H1 (cell line): ENCODE measurements at regions of chr17 and their contacts with region 1.

Region 1: DNA sequence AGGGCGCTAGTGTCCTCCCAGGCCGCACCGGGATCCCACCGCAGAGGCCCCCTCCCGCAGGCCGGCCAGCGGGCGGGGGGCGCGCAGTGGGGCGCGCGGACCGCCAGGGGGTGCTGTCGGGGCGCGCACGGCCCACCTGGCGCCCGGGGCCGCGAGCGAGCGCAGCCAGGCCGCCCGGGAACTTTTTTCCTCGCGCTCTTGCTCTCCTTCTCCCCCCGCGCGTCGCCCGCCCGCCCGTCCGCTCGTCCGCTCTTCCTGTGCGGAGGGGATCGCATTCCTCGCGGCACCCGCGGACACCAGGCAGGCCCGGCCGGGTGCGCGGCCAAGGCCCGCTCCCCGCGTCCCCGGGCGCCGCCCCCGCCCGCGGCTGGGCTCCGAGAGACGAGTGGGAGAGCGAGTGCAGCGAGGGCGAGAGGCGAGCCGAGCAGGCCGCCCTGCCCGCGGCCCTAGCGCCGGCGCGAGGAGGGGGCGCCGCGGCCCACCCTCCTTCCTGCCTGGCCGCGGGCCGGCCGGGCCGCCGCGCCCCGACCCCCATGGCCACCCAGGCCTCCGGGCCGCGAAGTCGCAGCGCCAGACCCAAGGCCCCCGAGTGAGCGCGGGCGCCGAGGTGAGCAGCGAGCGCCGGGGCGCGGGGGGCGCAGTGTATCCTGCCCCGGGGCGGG is at the start of gene RAI1:
- DNase-seq: peak in 1 of 2 experiments; percentile 83
- H3K4me3 ChIP-seq: peak within 1 kb of the TSS; percentile 34 to 71 (median 38); a peak in 6 of 8 replicates
- H3K27ac ChIP-seq: no peak within 1 kb of the TSS
- H3K4me1 ChIP-seq: peaks cover 4 to 30% (median 22%) of the 10 kb centered on the region in 4 experiments
- H3K27me3 ChIP-seq: peaks cover 70 to 96% (median 94%) of the 10 kb centered on the region in 4 experiments
- CTCF ChIP-seq: peak; percentile 77 to 83 (median 80)
- EP300 ChIP-seq: no peak
- POLR2A ChIP-seq: no peak
- RAD21 ChIP-seq: peak; percentile 41 to 82; a peak in 3 of 4 replicates
- total RNA-seq, gene RAI1: 0.80 and 1.2 TPM in 2 replicates

Region 2: GRCh38 chr17:17636272-17636885 is 44.9 kb before region 1 on chr17:
- CTCF ChIA-PET with region 1: no interaction called
- POLR2A ChIA-PET with region 1: no interaction called
- DNase-seq: no peak
- H3K4me3 ChIP-seq: no peak overlapping the region
- H3K27ac ChIP-seq: no peak overlapping the region
- H3K4me1 ChIP-seq: no peaks in the 10 kb centered on the region
- H3K27me3 ChIP-seq: no peaks in the 10 kb centered on the region; a peak in 1 of 7 replicates
- CTCF ChIP-seq: no peak
- EP300 ChIP-seq: no peak
- POLR2A ChIP-seq: no peak
- RAD21 ChIP-seq: no peak

Region 3: GRCh38 chr17:17653343-17653742 is 28.0 kb before region 1 on chr17:
- CTCF ChIA-PET with region 1: no interaction called
- POLR2A ChIA-PET with region 1: no interaction called
- DNase-seq: no peak
- H3K4me3 ChIP-seq: no peak overlapping the region
- H3K27ac ChIP-seq: no peak overlapping the region
- H3K4me1 ChIP-seq: no peaks in the 10 kb centered on the region
- H3K27me3 ChIP-seq: no peaks in the 10 kb centered on the region; a peak in 1 of 7 replicates
- CTCF ChIP-seq: no peak
- EP300 ChIP-seq: no peak
- POLR2A ChIP-seq: no peak
- RAD21 ChIP-seq: no peak

Region 4: DNA sequence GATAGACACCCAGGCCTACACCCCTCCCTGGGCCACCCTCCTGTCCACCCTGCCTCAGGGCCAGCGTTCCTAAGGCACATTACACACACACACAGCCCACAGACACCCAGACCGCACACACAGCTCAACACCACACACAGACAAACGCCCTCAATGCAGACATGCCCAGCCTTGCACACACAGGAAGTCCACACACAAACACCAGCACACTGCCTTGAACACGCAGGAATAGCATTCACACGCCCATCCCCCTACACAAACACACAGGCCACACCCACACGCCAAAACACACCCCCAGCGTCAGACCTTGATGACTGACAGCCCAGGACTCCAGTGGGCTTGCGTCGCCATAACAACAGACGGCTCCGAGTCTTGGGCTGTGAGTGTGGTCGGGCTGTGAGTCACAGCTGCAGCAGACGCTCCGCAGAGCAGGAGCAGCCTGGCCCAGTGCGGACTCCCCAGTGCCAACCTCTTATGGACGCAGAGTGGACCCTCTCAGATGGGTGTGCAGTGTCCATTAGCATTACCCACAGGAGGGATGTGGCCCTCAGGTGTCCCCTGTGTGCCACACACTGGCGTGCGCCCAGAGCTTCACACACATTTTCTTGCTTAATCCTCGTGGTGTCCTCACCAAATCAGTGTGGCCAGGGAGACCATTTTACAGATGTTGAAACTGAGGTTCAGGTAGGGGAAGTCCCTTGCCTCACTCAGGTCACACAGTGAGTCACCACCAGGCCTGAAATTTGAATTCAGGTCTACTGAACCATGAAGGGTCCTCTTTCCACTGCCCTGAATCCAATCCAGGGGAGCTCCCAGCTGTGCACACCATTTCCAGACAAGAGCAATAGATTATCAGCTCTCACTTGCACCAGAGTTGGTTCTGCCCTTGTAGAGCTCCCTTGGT is 17.9 kb before region 1 on chr17:
- CTCF ChIA-PET with region 1: interaction called, 15 read pairs
- POLR2A ChIA-PET with region 1: no interaction called
- DNase-seq: peak; percentile 60 to 66
- H3K4me3 ChIP-seq: no peak overlapping the region
- H3K27ac ChIP-seq: no peak overlapping the region
- H3K4me1 ChIP-seq: peaks cover 0 to 8% (median 6%) of the 10 kb centered on the region in 4 experiments; a peak in 6 of 7 replicates
- H3K27me3 ChIP-seq: no peaks in the 10 kb centered on the region; a peak in 1 of 7 replicates
- CTCF ChIP-seq: no peak
- EP300 ChIP-seq: no peak
- POLR2A ChIP-seq: no peak
- RAD21 ChIP-seq: no peak

Region 5: DNA sequence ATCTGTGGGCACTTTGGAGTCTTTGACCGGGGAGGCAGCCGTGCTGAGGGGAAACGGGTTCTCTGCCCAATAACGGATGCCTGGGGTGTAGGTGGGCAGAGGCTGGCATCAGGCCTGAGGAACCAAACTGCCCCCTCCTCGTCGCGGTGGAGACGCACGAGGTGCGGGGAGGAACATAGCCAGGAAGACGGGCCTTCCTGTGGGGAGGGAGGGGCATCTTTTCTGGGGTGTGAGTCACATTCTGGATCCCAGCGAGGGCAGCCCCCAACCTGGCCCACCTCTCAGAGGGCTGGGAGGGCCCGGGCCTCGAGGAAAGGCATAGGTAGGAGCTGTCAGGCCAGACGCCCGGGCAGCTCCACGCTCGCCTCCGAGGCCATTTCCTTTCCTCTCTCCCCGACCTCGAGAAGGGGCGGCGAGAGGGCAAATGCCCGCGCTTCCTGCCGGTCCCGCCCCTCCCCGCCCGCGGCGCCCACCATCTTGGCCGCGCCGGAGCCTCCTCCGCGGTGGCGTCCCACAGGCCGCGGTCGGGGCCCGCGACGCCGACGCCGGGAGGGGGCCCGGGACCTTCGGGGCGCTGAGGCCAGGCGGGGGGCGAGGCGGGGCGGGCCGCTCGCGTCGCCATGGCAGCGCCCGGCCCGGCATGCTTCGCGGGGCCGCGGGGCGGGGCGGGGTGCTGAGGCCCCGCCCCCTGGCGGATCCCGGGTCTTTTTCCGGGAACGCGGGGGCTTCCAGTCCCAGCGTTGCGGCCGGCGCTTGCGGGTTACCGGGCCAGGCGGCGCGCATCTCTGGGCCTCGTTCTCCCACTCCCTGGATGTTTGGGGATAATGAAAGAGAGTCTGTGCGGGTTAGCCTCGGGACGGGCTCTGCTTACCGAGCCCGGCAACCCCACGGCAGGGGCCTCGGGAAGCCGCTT is 13.1 kb after region 1 on chr17:
- CTCF ChIA-PET with region 1: interaction called, 22 read pairs
- POLR2A ChIA-PET with region 1: interaction called, 21 read pairs
- DNase-seq: peak in 1 of 2 experiments; percentile 84
- H3K4me3 ChIP-seq: peak overlapping the region; percentile 39 to 59 (median 53); a peak in 7 of 8 replicates
- H3K27ac ChIP-seq: peak overlapping the region; percentile 60
- H3K4me1 ChIP-seq: peaks cover 0 to 38% (median 36%) of the 10 kb centered on the region in 4 experiments; a peak in 6 of 7 replicates
- H3K27me3 ChIP-seq: peaks cover 32 to 79% (median 63%) of the 10 kb centered on the region in 4 experiments
- CTCF ChIP-seq: no peak
- EP300 ChIP-seq: no peak
- POLR2A ChIP-seq: no peak
- RAD21 ChIP-seq: no peak

Region 6: DNA sequence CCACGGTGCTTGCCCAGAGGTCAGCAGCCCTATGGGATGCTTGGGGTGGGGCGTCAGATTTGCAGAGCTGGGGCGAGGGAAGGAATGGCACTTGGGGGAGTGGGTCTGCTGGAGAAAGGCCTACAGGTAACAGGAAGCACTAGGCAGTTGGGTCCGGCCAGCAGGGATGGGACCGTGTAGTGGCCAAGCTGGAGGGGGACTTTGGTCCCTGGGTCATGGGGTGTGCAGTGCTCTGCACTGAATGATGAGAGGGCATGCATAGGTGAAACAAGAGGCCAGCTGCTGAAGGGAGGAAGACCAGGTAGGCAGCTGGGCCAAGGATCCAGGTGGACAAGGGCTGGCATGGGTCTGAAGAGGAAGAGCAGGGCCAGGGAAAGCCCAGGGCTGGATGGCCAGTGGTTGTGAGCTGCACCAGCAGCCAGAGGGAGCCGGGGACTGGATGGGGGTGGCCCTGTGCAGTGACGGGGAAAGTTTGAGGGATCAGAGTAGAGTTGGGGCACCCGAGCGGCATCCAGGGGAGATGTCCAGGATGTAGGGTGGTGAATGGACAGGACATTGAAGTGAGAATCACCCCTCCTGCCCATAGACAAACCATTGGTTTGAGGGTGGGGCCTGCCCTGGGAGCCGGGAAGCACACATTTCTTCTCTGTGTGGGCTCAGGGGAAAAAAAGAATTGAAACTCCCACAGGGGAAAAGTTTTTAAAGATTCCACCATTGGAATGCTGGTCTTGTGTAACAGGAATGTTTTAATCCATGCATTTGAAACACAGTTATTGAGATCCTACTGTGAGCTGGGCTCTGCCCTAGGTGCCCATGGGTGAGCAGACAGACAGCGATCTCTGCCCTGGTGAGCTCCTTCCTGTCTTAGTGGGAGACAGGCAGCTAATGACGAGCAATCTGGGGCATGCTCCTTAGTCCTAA is 25.1 kb after region 1 on chr17:
- CTCF ChIA-PET with region 1: interaction called, 14 read pairs
- POLR2A ChIA-PET with region 1: interaction called, 7 read pairs
- DNase-seq: no peak
- H3K4me3 ChIP-seq: no peak overlapping the region
- H3K27ac ChIP-seq: no peak overlapping the region
- H3K4me1 ChIP-seq: peaks cover 4 to 26% (median 16%) of the 10 kb centered on the region in 4 experiments
- H3K27me3 ChIP-seq: peaks cover 37 to 65% (median 59%) of the 10 kb centered on the region in 4 experiments
- CTCF ChIP-seq: peak; percentile 20 to 32 (median 26)
- EP300 ChIP-seq: no peak
- POLR2A ChIP-seq: no peak
- RAD21 ChIP-seq: no peak; a peak in 1 of 4 replicates

Region 7: DNA sequence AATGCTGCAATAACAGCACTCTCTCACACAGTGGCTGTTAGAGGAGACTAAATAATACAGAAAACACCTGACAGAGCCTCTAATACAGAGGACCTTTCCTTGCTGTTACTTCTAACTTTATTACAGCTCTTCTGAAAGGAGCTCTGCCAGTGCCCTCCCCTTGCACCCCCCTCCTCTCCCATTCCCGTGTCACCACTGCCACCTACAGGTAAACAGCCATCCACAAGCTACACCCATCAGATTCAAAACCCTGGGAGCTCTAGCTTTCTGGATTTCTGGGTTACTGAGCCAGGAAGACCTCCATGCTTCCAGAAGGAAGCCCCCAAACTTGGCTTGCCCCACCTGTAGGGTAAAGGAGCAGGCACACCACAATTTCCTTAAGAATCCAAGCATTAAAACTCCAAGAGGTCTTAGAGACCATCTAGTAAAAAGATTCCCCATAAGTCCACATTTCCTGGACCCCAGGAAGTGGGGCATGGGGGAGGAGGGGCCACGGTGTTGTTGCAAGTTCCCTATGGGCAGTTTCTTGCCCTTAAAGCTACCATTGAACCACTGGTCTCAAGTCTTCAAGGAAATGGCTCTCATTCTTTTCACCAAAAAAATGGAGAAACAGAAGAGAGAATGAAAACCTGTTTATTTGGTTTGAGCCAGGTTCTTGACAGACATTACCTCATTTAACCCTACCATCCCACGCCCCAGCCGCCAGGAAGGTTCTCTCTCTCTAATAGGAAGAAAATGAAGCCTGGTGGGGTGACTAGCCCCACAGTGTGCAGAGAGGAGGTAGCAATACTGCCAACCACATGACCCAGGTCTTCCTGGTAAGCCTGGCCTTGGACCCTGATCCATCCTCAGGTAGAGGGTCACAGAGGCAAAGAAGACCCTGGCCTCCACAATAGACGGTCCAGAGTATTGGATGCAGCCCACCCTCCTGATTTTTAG is 238.1 kb after region 1 on chr17:
- CTCF ChIA-PET with region 1: interaction called, 12 read pairs
- POLR2A ChIA-PET with region 1: no interaction called
- DNase-seq: peak in 1 of 2 experiments; percentile 75
- H3K4me3 ChIP-seq: no peak overlapping the region
- H3K27ac ChIP-seq: no peak overlapping the region
- H3K4me1 ChIP-seq: peaks cover 13 to 18% (median 16%) of the 10 kb centered on the region in 4 experiments
- H3K27me3 ChIP-seq: no peaks in the 10 kb centered on the region; a peak in 1 of 7 replicates
- CTCF ChIP-seq: peak; percentile 79 to 91 (median 86)
- EP300 ChIP-seq: no peak
- POLR2A ChIP-seq: no peak
- RAD21 ChIP-seq: peak; percentile 94 to 99